ENCODE measurements at regions of chr3 and their contacts with region 1.

Region 1: GRCh38 chr3:196969660-196970546 is 1.3 kb upstream of the PIGZ start:
- DNase-seq: peak; percentile 42
- H3K4me3 ChIP-seq: peak overlapping the region; percentile 42 to 76
- H3K27ac ChIP-seq: peak overlapping the region in 1 of 2 donors; percentile 23
- H3K4me1 ChIP-seq: no peaks in the 10 kb centered on the region
- H3K27me3 ChIP-seq: no peaks in the 10 kb centered on the region
- CTCF ChIP-seq: peak; percentile 80 to 97 (median 90)
- POLR2A ChIP-seq: no peak

Region 2: DNA sequence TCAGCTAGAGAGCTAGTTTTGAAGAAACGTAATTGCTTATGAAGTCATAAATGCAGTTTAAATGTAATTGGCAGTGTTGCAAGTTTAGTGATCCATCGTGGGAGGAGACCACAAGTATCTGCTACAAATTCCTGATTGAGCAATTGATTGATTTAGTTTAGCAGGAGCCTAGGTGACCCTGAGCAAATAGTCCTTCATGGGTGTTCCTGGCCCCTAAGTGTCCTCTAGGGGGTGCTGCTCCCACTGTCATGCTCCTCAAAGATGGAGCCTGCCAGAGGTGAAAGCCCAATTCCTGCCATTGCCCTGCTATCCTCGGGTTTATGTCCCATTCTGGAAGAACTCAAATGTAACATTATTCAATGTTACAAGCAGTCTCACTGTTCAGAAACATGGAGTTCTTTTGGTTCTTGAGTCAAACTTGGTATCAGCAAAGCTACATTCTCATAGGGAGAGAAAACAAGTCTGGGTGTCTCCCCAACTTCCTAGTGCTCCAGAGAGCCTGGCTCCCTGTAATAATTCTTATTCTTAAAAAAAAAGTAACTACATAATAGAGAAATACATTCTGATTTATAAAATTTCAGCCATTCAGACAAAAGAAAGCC is 132.0 kb before region 1 on chr3:
- intact Hi-C with region 1: loop called (anchors 10 kb)
- DNase-seq: peak; percentile 39
- H3K4me3 ChIP-seq: no peak overlapping the region
- H3K27ac ChIP-seq: no peak overlapping the region
- H3K4me1 ChIP-seq: no peaks in the 10 kb centered on the region
- H3K27me3 ChIP-seq: no peaks in the 10 kb centered on the region
- CTCF ChIP-seq: peak in 3 of 4 experiments; percentile 54 to 65 (median 55)
- POLR2A ChIP-seq: no peak

Region 3: DNA sequence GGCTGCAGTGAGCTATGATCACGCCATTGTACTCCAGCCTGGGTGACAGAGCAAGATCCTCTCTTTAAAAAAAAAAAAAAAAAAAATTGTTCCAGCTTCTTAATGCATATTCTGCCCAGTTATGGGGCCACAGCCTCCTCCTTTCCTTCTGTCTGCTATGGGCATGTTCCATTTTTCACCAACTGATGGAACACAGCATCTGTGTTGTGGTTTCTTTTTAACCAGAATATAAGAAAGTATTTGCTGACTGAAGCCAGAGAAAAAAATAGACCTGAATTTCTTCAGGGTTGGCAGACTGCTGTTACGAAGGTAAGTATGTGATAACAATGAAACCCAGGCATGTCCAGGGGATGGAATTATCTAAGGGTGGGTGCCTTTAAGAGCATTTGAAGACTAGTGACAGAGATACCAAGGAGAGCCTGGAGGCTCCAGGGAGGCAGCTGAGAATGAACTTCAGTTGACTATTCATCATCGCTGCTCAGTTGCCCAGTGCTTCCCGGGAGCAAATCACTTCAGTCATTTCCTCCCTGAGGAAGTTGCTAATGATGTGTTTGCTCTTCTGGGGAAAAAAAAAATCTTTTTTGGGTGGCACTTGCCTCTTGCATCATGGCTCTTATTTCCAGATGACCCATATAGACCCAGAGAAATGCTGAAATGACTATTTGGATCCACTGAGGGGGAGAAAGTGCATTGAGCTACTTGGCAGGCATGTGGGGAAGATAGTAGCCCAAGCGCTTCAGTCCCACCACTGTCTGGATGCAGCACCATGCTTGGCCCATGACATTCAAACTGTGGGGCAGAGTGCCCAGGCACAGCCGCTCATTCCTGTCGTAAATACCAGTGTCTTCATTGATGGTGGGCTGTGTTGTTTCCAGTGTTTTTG is 42.1 kb before region 1 on chr3:
- intact Hi-C with region 1: no loop called
- DNase-seq: no peak
- H3K4me3 ChIP-seq: no peak overlapping the region
- H3K27ac ChIP-seq: no peak overlapping the region
- H3K4me1 ChIP-seq: no peaks in the 10 kb centered on the region
- H3K27me3 ChIP-seq: no peaks in the 10 kb centered on the region
- CTCF ChIP-seq: no peak
- POLR2A ChIP-seq: no peak